GM12878 (cell line): ENCODE measurements at regions of chr4 and their contacts with region 1.

Region 1: DNA sequence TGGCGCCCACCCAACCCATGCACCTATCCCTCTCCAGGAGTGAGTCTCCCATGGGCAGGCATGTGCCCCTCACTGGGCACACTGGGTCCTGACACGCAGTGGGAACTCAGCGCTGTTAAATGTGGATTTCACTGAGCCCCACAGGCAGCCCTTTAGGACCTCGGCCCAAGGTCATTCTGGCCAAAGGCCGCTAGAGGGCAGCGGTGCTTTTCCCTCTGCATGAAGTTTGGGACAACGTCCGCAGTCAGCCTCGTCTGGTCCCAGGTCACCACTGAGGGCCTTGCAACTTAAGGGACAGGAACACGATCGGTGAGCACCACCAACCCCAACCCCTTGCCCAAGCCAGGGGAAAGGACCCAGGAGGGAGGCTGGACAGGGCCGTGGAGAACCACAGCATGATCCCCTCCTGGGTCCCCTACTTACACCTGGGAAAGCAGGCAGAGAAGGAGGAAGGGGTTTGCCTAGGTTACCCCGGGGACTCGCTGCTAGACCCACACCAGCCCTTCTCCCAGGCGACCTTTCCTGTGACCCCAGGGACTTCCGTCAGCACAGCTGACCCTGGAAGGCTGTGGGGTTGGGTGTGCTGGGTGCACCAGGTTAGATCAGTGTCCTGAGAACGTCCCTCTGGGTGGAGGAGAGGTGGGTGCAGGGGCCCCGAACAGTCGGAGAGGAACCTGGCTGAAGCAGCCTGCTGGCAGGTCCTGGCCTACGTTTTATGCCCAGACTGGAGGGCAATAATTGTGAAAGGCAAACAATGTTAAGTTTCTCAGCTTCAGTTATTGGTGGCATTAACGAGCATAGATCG is 24.0 kb downstream of the CYTL1 start:
- DNase-seq: no peak
- ATAC-seq: peak; percentile 94
- H3K4me3 ChIP-seq: no peak overlapping the region
- H3K27ac ChIP-seq: no peak overlapping the region
- H3K4me1 ChIP-seq: no peaks in the 10 kb centered on the region
- H3K27me3 ChIP-seq: no peaks in the 10 kb centered on the region
- CTCF ChIP-seq: peak; percentile 85 to 93 (median 91)
- EP300 ChIP-seq: no peak
- POLR2A ChIP-seq: no peak
- RAD21 ChIP-seq: peak; percentile 80

Region 2: DNA sequence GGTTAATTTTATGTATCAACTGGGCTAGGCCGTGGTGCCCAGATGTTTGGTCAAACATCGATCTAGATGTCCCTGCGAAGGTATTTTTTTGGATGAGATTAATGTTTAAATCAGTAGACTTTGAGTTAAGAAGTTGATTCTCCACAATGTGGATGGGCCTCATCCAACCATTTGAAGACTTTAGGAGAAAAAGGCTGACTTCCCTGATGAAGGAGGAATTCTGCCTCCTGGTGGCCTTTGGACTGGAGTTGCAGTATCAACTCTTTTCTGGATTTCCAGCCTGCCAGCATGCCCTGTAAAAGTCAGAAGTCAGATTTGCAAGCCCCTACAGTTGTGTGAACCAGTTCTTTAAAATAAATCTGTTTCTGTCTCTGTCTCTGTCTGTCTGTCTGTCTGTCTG is 147.4 kb after region 1 on chr4:
- CTCF ChIA-PET with region 1: no interaction called
- POLR2A ChIA-PET with region 1: no interaction called
- RAD21 ChIA-PET with region 1: no interaction called
- SMC1A ChIA-PET with region 1: no interaction called
- in situ Hi-C with region 1: no loop called
- intact Hi-C with region 1: loop called (anchors 10 kb)
- DNase-seq: no peak
- ATAC-seq: no peak
- H3K4me3 ChIP-seq: no peak overlapping the region
- H3K27ac ChIP-seq: no peak overlapping the region
- H3K4me1 ChIP-seq: no peaks in the 10 kb centered on the region
- H3K27me3 ChIP-seq: no peaks in the 10 kb centered on the region
- CTCF ChIP-seq: peak in 2 of 3 experiments; percentile 26 to 27; a peak in 2 of 6 replicates
- EP300 ChIP-seq: no peak
- POLR2A ChIP-seq: no peak
- RAD21 ChIP-seq: peak; percentile 17; the same call in 1 of the 2 replicates

Region 3: DNA sequence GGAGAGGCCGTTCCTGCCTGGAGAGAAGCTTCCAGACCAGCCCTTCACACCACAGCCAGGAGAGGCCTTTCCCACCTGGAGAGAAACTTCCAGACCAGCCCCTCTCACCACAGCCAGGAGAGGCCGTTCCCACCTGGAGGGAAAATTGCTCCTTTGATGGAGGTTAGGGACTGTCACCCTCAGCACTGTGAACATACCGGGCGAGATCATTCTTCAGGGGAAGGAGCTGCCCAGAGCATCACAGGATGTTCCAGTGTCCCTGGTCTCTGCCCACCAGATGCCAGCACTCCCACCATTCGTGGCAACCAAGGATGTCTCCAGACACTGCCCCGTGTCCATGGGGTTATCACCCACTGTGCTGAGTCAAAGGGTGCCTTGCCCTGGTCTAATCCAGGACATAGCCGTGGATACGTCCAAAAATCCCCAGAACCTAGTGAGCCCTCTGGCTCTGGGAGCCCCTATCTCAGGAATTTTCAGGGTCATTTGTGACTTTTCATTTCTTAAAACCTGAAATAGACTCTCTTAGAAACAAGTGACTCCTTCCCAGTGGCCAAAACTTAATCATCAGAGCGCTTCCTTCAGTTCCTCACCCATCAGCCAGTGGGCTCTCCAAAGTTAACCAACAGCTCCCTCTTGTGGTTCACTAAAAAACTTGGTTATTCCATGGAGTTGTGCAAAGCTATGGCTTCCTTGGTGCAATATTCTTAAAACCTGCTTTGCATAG is 817.4 kb after region 1 on chr4:
- CTCF ChIA-PET with region 1: interaction called, 3 read pairs
- POLR2A ChIA-PET with region 1: no interaction called
- RAD21 ChIA-PET with region 1: no interaction called
- SMC1A ChIA-PET with region 1: no interaction called
- in situ Hi-C with region 1: loop called (anchors 10 kb)
- intact Hi-C with region 1: loop called (anchors 1 kb)
- DNase-seq: no peak
- ATAC-seq: peak; percentile 92
- H3K4me3 ChIP-seq: no peak overlapping the region
- H3K27ac ChIP-seq: no peak overlapping the region
- H3K4me1 ChIP-seq: no peaks in the 10 kb centered on the region
- H3K27me3 ChIP-seq: no peaks in the 10 kb centered on the region
- CTCF ChIP-seq: peak; percentile 55 to 74 (median 69); a peak in 5 of 6 replicates
- EP300 ChIP-seq: no peak
- POLR2A ChIP-seq: no peak
- RAD21 ChIP-seq: peak; percentile 91